Caco-2 (cell line): ENCODE measurements at regions of chr2 and their contacts with region 1.

Region 1: DNA sequence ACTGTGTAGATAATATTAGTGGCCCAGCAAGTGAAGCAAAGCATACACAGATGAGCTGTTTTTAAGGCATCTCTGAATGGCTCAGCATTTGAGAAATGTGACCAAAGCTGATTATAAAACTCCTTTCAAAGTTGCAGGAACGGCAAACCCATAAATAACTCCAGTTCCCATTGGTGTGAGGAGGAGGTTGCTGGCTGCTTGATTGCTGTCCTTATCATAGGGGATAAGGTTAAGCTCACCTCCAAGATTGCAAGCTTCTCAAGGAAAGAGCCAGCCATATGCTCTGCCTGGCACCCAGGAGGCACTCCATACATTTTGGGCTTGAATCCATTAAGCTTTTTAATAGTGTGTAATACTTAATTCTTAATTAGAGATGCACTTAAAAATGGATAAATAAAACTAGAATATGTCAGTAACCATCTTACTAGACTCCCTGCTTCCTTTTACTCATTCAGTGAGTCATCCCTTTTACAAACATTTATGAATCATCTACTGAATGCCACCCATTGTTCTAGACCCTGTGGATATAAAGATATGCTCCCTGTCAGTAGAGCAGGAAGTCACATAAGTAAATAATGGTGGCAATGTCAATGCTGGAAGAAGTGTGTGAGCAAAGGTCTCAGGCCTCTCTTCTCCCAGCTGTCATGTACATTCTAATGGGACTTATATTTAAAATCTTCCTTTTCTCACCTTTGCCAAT is 99.3 kb downstream of the SPATS2L start:
- DNase-seq: peak; percentile 82 to 87
- H3K4me3 ChIP-seq: no peak overlapping the region
- H3K4me3 Mint-ChIP-seq: peak overlapping the region; percentile 55
- H3K27ac Mint-ChIP-seq: peak overlapping the region; percentile 60
- H3K4me1 ChIP-seq: peaks cover 66% of the 10 kb centered on the region
- H3K4me1 Mint-ChIP-seq: peaks cover 70% of the 10 kb centered on the region
- H3K27me3 ChIP-seq: no peaks in the 10 kb centered on the region
- H3K27me3 Mint-ChIP-seq: no peaks in the 10 kb centered on the region
- CTCF ChIP-seq: no peak

Region 2: DNA sequence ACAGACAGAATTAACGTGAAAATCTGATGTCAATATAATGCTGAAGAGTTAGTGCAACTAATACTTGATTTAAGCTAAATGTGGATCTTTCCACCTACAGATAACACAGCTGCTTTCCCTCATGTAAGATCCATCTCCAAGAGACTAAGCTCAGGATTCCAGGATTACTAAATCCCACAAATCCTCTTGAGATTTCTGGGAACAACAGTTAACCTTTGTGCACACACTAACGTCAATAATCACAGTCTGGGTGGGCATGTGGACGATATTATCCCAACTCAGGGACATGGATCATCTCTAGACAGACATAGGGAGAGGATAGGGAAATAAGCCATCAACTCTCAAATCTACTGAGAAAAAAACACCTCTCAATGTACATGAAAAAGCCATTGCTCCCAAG is 1380.6 kb before region 1 on chr2:
- CTCF ChIA-PET with region 1: no interaction called
- POLR2A ChIA-PET with region 1: no interaction called
- intact Hi-C with region 1: no loop called
- DNase-seq: no peak
- H3K4me3 ChIP-seq: no peak overlapping the region
- H3K4me3 Mint-ChIP-seq: no peak overlapping the region
- H3K27ac Mint-ChIP-seq: no peak overlapping the region
- H3K4me1 ChIP-seq: no peaks in the 10 kb centered on the region
- H3K4me1 Mint-ChIP-seq: no peaks in the 10 kb centered on the region
- H3K27me3 ChIP-seq: no peaks in the 10 kb centered on the region
- H3K27me3 Mint-ChIP-seq: no peaks in the 10 kb centered on the region
- CTCF ChIP-seq: no peak

Region 3: GRCh38 chr2:200319548-200320337 is 86.0 kb before region 1 on chr2:
- CTCF ChIA-PET with region 1: no interaction called
- POLR2A ChIA-PET with region 1: no interaction called
- intact Hi-C with region 1: loop called (anchors 1 kb)
- DNase-seq: peak in 1 of 2 experiments; percentile 35
- H3K4me3 ChIP-seq: no peak overlapping the region
- H3K4me3 Mint-ChIP-seq: no peak overlapping the region
- H3K27ac Mint-ChIP-seq: peak overlapping the region; percentile 54
- H3K4me1 ChIP-seq: peaks cover 88% of the 10 kb centered on the region
- H3K4me1 Mint-ChIP-seq: peaks cover 42% of the 10 kb centered on the region
- H3K27me3 ChIP-seq: no peaks in the 10 kb centered on the region
- H3K27me3 Mint-ChIP-seq: no peaks in the 10 kb centered on the region
- CTCF ChIP-seq: no peak

Region 4: DNA sequence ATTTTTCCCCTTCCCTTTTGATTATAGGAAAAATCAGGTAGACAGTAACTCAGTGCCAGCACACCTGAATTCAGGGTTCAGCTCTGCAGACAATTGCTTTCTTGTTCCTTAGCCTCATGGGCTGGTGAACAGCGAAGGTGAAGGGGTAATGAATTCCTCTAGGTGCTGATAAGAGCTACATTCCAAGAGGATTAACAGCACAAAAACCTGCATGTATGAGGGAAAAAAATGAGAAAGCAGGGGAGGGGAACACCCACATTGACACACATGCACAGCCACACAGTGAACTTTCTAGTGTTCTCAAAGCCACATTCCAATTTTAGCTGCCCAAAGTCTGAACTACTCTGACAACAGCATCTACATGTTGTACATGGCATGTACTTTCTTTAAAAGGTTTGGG is 53.1 kb before region 1 on chr2:
- CTCF ChIA-PET with region 1: interaction called, 3 read pairs
- POLR2A ChIA-PET with region 1: interaction called, 6 read pairs
- intact Hi-C with region 1: loop called (anchors 1 kb)
- DNase-seq: peak; percentile 78 to 82
- H3K4me3 ChIP-seq: no peak overlapping the region
- H3K4me3 Mint-ChIP-seq: peak overlapping the region; percentile 67
- H3K27ac Mint-ChIP-seq: peak overlapping the region; percentile 89
- H3K4me1 ChIP-seq: peaks cover 78% of the 10 kb centered on the region
- H3K4me1 Mint-ChIP-seq: peaks cover 74% of the 10 kb centered on the region
- H3K27me3 ChIP-seq: no peaks in the 10 kb centered on the region
- H3K27me3 Mint-ChIP-seq: no peaks in the 10 kb centered on the region
- CTCF ChIP-seq: no peak

Region 5: GRCh38 chr2:200376513-200377354 is 29.0 kb before region 1 on chr2:
- CTCF ChIA-PET with region 1: no interaction called
- POLR2A ChIA-PET with region 1: interaction called, 5 read pairs
- intact Hi-C with region 1: loop called (anchors 1 kb)
- DNase-seq: peak in 1 of 2 experiments; percentile 57
- H3K4me3 ChIP-seq: no peak overlapping the region
- H3K4me3 Mint-ChIP-seq: peak overlapping the region; percentile 65
- H3K27ac Mint-ChIP-seq: peak overlapping the region; percentile 90
- H3K4me1 ChIP-seq: peaks cover 91% of the 10 kb centered on the region
- H3K4me1 Mint-ChIP-seq: peaks cover 74% of the 10 kb centered on the region
- H3K27me3 ChIP-seq: no peaks in the 10 kb centered on the region
- H3K27me3 Mint-ChIP-seq: no peaks in the 10 kb centered on the region
- CTCF ChIP-seq: no peak

Region 6: DNA sequence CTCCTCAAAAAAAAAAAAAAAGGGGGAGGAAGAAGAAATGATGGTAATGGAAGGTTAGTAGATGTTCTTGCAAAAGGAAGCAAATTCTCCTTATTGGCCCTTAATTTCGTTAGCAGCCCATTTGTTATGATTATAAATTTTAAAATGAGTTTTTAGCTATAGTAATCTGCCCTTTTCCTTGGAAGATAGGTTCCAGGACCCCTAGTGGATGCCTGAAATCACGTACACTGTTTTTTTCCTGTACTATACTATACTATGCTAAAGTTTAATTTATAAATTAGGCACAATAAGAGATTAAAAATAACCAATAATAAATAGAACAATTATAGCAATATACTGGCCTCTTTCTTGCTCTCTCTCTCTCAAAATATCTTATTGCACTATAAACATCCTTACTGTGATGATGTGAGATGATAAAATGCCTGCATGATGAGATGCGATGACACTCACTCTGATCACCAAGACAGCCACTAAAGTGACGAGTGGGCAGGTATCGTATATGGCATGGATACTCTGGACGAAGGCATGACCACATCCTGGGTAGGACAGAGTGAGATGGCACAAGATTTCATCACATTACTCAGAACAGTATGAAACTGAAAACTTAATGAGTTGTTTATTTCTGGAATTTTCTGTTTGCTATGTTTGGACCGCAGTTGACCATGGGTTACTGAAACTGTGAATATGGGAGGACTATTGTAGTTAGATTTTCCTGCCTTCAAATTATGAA is 16.9 kb after region 1 on chr2:
- CTCF ChIA-PET with region 1: no interaction called
- POLR2A ChIA-PET with region 1: interaction called, 3 read pairs
- intact Hi-C with region 1: loop called (anchors 2 kb)
- DNase-seq: no peak
- H3K4me3 ChIP-seq: no peak overlapping the region
- H3K4me3 Mint-ChIP-seq: no peak overlapping the region
- H3K27ac Mint-ChIP-seq: no peak overlapping the region
- H3K4me1 ChIP-seq: 0 out of 2 replicates have a peak, but pooled peaks cover 11% of the 10 kb centered on the region
- H3K4me1 Mint-ChIP-seq: peaks cover 7% of the 10 kb centered on the region
- H3K27me3 ChIP-seq: no peaks in the 10 kb centered on the region
- H3K27me3 Mint-ChIP-seq: no peaks in the 10 kb centered on the region
- CTCF ChIP-seq: no peak